ENCODE measurements at regions of chr20 and their contacts with region 1.

Region 1: DNA sequence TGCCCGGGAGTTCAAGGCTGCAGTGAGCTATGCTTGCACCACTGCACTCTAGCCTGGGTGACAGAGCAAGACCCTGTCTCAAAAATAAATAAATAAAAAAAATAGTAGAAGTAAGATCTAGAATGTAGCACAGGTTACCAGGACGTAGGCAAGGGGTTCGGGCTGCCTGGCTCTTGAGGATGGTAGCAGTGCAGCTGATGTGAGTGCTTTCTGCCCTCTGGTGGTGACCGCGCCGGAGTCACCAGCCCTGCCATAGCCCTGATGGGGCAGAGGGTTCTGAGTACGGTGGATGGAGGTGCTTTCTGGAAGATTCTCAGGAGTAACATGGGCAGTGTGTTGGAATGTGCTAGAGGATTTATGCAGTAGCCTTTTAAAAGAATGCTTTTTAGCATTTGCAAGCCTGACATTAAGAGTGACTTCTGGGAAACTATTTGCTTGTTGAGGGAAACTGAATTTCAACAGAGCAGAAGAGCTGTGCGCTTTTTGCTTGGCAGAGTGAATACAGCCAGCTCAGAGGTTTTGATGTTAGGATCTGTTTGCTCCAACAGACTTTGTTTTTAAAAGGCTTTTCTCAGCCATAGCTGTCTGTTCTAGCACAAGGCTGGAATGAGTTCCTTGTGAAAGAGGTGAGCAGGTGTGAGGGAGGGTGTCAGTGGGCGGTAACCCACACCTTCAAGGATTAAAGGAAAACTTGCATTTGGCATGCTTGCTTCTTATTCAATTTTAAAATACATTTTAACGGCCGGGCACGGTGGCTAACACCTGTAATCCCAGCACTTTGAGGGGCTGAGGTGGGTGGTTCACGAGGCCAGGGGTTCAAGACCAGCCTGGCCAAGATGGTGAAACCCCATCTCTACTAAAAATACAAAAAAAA is 65.9 kb downstream of the PTPN1 start:
- DNase-seq: peak; percentile 75
- ATAC-seq: peak; percentile 92
- H3K4me3 Mint-ChIP-seq: no peak overlapping the region
- H3K27ac Mint-ChIP-seq: peak overlapping the region; percentile 20
- H3K4me1 Mint-ChIP-seq: peaks cover 14% of the 10 kb centered on the region
- H3K27me3 Mint-ChIP-seq: no peaks in the 10 kb centered on the region

Region 2: GRCh38 chr20:50460460-50461267 is 115.4 kb before region 1 on chr20:
- CTCF ChIA-PET with region 1: interaction called, 20 read pairs
- DNase-seq: peak; percentile 87
- ATAC-seq: peak; percentile 88
- H3K4me3 Mint-ChIP-seq: no peak overlapping the region
- H3K27ac Mint-ChIP-seq: no peak overlapping the region
- H3K4me1 Mint-ChIP-seq: peaks cover 24% of the 10 kb centered on the region
- H3K27me3 Mint-ChIP-seq: peaks cover 27% of the 10 kb centered on the region

Region 3: GRCh38 chr20:50484276-50484976 is 91.7 kb before region 1 on chr20:
- CTCF ChIA-PET with region 1: interaction called, 25 read pairs
- DNase-seq: no peak
- ATAC-seq: no peak
- H3K4me3 Mint-ChIP-seq: peak overlapping the region; percentile 80
- H3K27ac Mint-ChIP-seq: peak overlapping the region; percentile 87
- H3K4me1 Mint-ChIP-seq: peaks cover 56% of the 10 kb centered on the region
- H3K27me3 Mint-ChIP-seq: no peaks in the 10 kb centered on the region

Region 4: GRCh38 chr20:50509935-50510705 is 66.0 kb before region 1 on chr20 and contains the start of gene PTPN1:
- CTCF ChIA-PET with region 1: interaction called, 40 read pairs
- DNase-seq: peak; percentile 99
- ATAC-seq: peak; percentile 90
- H3K4me3 Mint-ChIP-seq: peak within 1 kb of the TSS; percentile 95
- H3K27ac Mint-ChIP-seq: peak within 1 kb of the TSS; percentile 81
- H3K4me1 Mint-ChIP-seq: peaks cover 41% of the 10 kb centered on the region
- H3K27me3 Mint-ChIP-seq: no peaks in the 10 kb centered on the region
- total RNA-seq, gene PTPN1: 62.5 to 74.7 TPM

Region 5: GRCh38 chr20:50561379-50562078 is 14.6 kb before region 1 on chr20:
- CTCF ChIA-PET with region 1: interaction called, 16 read pairs
- DNase-seq: peak; percentile 77
- ATAC-seq: peak; percentile 92
- H3K4me3 Mint-ChIP-seq: peak overlapping the region; percentile 47
- H3K27ac Mint-ChIP-seq: peak overlapping the region; percentile 83
- H3K4me1 Mint-ChIP-seq: peaks cover 58% of the 10 kb centered on the region
- H3K27me3 Mint-ChIP-seq: no peaks in the 10 kb centered on the region

Region 6: GRCh38 chr20:50610221-50610620 is 34.1 kb after region 1 on chr20:
- CTCF ChIA-PET with region 1: no interaction called
- DNase-seq: no peak
- ATAC-seq: peak; percentile 23
- H3K4me3 Mint-ChIP-seq: no peak overlapping the region
- H3K27ac Mint-ChIP-seq: no peak overlapping the region
- H3K4me1 Mint-ChIP-seq: no peaks in the 10 kb centered on the region
- H3K27me3 Mint-ChIP-seq: peaks cover 4% of the 10 kb centered on the region

Region 7: DNA sequence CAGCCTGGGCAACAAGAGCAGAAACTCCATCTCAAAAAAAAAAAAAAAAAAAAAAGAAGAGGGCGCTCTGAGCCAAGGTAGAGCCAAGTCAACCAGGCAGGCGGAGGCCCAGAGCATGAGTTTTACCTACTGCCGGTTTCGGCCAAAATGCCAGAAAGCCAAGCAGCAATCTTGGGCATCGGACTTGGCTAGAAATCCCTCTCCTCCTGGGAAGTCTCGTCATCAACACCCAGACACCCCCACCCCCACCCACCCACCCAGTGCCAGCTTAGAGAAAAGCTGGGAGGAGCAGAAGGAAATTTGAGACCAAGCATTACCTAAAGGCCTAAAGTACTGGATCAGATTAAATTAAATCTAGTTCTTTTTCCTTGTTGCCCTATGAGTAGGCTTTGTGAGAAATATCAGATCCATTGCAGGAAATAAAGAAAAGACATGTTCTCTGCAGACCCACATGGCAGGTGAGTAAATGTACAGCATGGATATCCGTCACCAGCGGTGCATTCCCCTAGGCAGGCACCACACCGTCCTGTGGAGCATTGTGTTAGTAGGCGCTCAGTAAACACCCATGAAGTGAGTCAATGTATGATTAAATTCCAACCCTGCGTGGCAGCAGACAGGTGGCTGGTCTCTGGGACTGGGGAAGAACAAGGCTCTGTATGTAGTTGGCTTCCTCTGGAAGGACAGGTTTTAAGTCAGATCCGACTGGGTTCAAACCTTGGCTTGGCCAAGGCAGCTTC is 94.2 kb after region 1 on chr20:
- CTCF ChIA-PET with region 1: no interaction called
- DNase-seq: no peak
- ATAC-seq: no peak
- H3K4me3 Mint-ChIP-seq: no peak overlapping the region
- H3K27ac Mint-ChIP-seq: no peak overlapping the region
- H3K4me1 Mint-ChIP-seq: no peaks in the 10 kb centered on the region
- H3K27me3 Mint-ChIP-seq: no peaks in the 10 kb centered on the region

Region 8: GRCh38 chr20:51050531-51051075 is 474.5 kb after region 1 on chr20:
- CTCF ChIA-PET with region 1: no interaction called
- DNase-seq: no peak
- ATAC-seq: no peak
- H3K4me3 Mint-ChIP-seq: no peak overlapping the region
- H3K27ac Mint-ChIP-seq: no peak overlapping the region
- H3K4me1 Mint-ChIP-seq: no peaks in the 10 kb centered on the region
- H3K27me3 Mint-ChIP-seq: peaks cover 32% of the 10 kb centered on the region

Measured in activated CD8-positive, alpha-beta memory T cell treated with anti-CD3 and anti-CD28 coated beads, Interleukin-2, amount 10 ng/mL, durations not matched to agents 7 days and 5 days (primary cell).